MCF 10A (cell line): ENCODE measurements at regions of chr4 and their contacts with region 1.

Region 1: GRCh38 chr4:138919094-138919936 is 96.3 kb upstream of the NOCT start:
- DNase-seq: peak; percentile 85
- H3K4me3 Mint-ChIP-seq: no peak overlapping the region
- H3K27ac Mint-ChIP-seq: no peak overlapping the region
- H3K4me1 Mint-ChIP-seq: peaks cover 7% of the 10 kb centered on the region
- H3K27me3 Mint-ChIP-seq: no peaks in the 10 kb centered on the region
- CTCF ChIP-seq: peak; percentile 71

Region 2: DNA sequence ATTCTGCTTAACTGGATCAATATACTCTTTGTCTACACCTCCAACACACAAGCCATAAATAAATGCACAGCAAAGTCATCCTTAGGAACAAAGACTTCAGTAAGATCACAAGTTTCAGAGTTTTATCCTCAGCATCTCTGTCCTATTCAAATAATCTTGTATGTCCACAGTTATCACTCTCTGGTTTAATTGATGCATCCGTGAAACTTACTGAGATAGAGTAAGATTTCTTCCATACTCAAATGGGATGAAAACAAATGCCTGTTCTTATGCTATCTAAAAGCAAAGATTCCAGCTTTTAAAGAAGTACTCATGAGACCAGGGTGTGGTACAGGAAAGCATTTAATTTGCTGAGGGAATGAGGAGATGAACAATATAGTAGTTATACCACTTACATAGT is 492.5 kb before region 1 on chr4:
- CTCF ChIA-PET with region 1: no interaction called
- POLR2A ChIA-PET with region 1: no interaction called
- intact Hi-C with region 1: no loop called
- DNase-seq: no peak
- H3K4me3 Mint-ChIP-seq: no peak overlapping the region
- H3K27ac Mint-ChIP-seq: no peak overlapping the region
- H3K4me1 Mint-ChIP-seq: no peaks in the 10 kb centered on the region
- H3K27me3 Mint-ChIP-seq: no peaks in the 10 kb centered on the region
- CTCF ChIP-seq: no peak

Region 3: DNA sequence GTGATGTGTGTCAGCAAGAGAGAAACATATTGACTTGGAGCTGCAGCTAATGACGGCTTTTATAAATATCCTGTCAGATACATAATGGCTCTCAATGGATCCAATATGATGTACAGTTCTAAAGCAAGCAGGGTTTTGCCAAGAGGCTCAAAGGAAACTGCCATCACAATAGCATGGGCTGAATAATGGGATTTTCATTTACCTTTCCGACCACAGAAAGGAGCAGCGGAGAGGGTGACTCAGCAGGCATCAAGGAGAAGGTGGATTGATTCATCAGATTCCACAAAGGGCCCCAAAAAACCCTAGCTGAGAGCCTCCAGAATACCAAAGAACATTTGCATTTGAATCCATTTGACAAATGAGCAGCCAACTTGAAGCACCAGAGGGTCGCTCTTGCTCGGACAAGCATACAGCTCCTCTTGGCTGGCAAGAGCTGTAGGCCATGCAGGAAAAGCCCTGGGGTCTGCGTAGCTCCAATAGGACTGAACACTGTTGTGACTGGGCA is 259.5 kb before region 1 on chr4:
- CTCF ChIA-PET with region 1: no interaction called
- POLR2A ChIA-PET with region 1: no interaction called
- intact Hi-C with region 1: no loop called
- DNase-seq: no peak
- H3K4me3 Mint-ChIP-seq: no peak overlapping the region
- H3K27ac Mint-ChIP-seq: no peak overlapping the region
- H3K4me1 Mint-ChIP-seq: no peaks in the 10 kb centered on the region
- H3K27me3 Mint-ChIP-seq: no peaks in the 10 kb centered on the region
- CTCF ChIP-seq: no peak

Region 4: DNA sequence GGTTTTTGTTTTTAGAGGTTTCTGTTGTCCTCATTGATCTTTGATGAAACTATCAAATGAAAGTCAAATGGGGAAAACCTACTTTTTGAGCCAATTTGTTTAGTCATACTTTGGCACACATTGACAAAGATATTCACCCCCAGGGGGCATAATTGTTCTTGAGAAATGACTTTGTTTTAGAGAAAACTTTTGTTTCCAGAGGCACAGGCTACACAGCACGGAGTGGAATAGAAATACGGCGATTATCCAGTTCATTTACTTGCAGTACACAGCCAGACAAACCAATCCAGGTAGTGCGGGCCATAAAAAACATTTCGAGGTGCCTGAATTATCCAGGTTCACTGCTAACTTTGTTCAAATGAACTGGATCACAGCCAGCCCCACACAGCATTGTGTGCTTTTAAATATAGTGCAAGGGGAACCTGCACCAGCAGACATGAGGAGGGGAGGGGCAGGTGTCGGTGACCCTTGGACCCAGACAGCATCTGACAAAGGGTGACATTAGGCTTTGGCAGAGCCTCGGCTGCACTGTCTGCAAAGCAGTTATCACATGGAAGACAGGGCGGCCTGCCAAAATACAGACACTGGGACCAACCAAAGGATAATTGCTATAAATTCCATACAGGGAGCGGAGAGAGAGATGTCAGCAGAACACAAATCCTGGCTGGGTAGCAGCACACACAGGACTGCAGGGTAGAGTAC is 83.3 kb before region 1 on chr4:
- CTCF ChIA-PET with region 1: no interaction called
- POLR2A ChIA-PET with region 1: no interaction called
- intact Hi-C with region 1: loop called (anchors 2 kb)
- DNase-seq: peak; percentile 80
- H3K4me3 Mint-ChIP-seq: no peak overlapping the region
- H3K27ac Mint-ChIP-seq: no peak overlapping the region
- H3K4me1 Mint-ChIP-seq: peaks cover 6% of the 10 kb centered on the region
- H3K27me3 Mint-ChIP-seq: peaks cover 6% of the 10 kb centered on the region
- CTCF ChIP-seq: no peak

Region 5: DNA sequence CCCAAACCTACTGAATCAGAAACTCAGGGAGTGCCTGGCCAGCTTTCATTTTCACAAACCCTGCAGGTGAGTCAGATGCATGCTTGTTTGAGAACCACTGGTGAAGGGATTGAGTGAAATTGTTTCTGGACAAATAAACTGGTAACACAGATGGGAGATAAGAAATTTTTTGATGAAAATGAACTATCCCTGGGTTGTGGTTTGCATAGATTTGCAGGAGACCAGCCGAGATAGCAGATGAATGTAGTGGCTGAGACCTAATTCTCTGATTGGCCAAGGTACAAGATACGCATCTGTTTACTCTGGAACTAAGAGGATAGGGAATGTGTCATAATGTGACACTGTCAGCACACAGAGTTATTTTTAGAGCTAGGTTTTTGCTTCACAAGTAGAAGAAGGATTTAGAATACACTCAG is 21.5 kb before region 1 on chr4:
- CTCF ChIA-PET with region 1: interaction called, 12 read pairs
- POLR2A ChIA-PET with region 1: no interaction called
- intact Hi-C with region 1: no loop called
- DNase-seq: peak; percentile 50
- H3K4me3 Mint-ChIP-seq: peak overlapping the region; percentile 41
- H3K27ac Mint-ChIP-seq: peak overlapping the region; percentile 29
- H3K4me1 Mint-ChIP-seq: peaks cover 20% of the 10 kb centered on the region
- H3K27me3 Mint-ChIP-seq: no peaks in the 10 kb centered on the region
- CTCF ChIP-seq: no peak

Region 6: DNA sequence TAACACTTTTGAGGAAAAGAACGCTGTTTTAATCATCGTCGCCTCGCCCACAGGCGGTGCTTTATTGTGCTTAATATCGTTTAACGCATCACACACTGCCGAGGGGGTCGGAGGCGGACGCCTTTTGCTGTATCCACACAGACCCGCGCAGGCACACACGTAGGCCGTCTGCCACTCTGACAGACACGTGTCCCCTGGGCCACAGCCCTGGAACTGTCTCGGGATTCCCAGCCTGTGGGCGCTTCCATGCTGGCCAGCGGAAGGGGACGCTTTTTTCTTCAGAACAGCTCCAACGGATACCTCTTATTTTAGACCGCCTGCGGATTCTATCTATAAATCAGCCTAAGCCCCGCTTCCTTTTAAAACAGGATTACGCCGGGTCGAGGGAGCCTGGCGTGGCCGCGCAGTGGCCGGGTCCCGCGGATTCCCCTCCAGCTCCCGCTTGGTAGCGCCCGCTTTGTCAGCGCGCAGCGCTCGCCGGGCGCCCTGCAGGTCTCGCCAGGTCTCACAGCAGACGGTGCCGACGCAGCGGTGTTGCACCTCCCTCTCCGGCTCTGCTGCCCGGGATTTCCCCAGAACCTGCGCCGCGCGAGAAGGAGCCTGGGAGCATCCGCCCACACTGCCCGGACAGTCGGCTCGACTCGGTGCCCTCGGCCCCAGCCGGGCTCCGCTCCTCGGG is 96.1 kb after region 1 on chr4 and contains the start of gene NOCT:
- CTCF ChIA-PET with region 1: no interaction called
- POLR2A ChIA-PET with region 1: no interaction called
- intact Hi-C with region 1: no loop called
- DNase-seq: peak; percentile 94
- H3K4me3 Mint-ChIP-seq: peak within 1 kb of the TSS; percentile 72
- H3K27ac Mint-ChIP-seq: peak within 1 kb of the TSS; percentile 95
- H3K4me1 Mint-ChIP-seq: peaks cover 38% of the 10 kb centered on the region
- H3K27me3 Mint-ChIP-seq: no peaks in the 10 kb centered on the region
- CTCF ChIP-seq: no peak
- total RNA-seq, gene NOCT: 16.5 and 25.5 TPM in 2 replicates